HepG2 (cell line): ENCODE measurements at regions of chr3 and their contacts with region 1.

Region 1: DNA sequence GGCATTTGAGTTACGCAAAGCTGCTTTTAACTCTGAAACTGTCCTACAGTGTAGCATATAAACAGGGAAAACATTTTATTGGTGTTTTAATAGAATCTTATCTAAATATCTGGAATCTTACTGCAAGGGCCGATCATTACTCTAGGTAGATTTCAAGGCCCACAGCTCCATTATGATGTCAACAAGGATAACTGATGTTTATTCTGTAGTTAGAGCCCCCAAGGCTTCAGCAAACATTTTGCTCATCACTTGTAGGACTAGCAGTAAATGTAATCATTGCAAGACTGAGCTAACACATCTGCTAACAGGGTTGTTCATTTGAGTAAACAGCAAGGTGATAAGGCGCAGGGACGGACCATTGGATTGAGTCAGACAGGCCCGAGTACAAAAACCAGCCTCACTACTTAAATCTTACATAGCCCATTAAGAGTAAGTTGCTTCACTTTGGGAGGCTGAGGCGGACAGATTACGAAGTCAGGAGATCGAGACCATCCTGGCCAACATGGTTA is 332.5 kb upstream of the TPRG1 start:
- DNase-seq: peak; percentile 98
- ATAC-seq: peak; percentile 100
- H3K4me3 ChIP-seq: peak overlapping the region in 1 of 3 experiments; percentile 12; a peak in 1 of 6 replicates
- H3K27ac ChIP-seq: peak overlapping the region; percentile 60
- H3K4me1 ChIP-seq: peaks cover 26% of the 10 kb centered on the region
- H3K27me3 ChIP-seq: no peaks in the 10 kb centered on the region
- CTCF ChIP-seq: no peak
- EP300 ChIP-seq: peak; percentile 85 to 98
- POLR2A ChIP-seq: no peak
- RAD21 ChIP-seq: no peak

Region 2: GRCh38 chr3:188720636-188721035 is 118.6 kb before region 1 on chr3:
- CTCF ChIA-PET with region 1: no interaction called
- POLR2A ChIA-PET with region 1: no interaction called
- in situ Hi-C with region 1: no loop called
- intact Hi-C with region 1: loop called (anchors 1 kb)
- DNase-seq: peak; percentile 95
- ATAC-seq: peak; percentile 99
- H3K4me3 ChIP-seq: no peak overlapping the region
- H3K27ac ChIP-seq: peak overlapping the region; percentile 78
- H3K4me1 ChIP-seq: peaks cover 47% of the 10 kb centered on the region
- H3K27me3 ChIP-seq: no peaks in the 10 kb centered on the region
- CTCF ChIP-seq: no peak
- EP300 ChIP-seq: peak; percentile 74 to 99; a peak in 3 of 4 replicates
- POLR2A ChIP-seq: no peak
- RAD21 ChIP-seq: no peak

Region 3: DNA sequence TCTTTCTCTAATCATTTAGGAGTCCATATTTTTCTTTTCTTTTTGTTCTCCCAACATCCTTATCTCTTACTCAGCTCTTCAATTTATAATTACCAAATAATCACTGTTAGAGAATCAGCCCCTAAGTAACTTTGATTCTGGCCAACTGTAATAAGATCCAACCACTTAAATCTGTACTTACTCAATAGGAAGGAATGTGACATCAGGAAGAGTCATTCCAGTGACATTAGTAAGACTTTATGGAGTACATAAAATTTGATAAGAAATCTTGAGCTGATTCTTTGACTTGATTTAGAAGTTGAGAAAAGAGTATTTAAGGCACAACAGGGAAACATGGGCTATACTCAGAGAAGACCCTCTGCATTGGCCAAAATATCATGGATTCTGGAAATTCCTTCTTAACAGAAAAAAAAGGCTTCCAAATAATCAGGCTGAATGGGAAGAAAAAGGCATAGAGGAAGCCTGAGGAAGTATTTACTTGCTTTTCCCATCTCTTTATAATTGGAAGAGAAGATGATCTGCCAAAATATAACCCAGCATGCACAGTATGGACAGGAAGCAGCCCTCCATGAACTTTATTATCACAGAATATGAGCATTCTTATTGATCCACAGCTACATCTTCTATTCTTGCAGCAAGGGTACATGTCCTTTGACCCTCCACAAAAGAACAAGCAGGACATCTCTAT is 42.9 kb after region 1 on chr3:
- CTCF ChIA-PET with region 1: no interaction called
- POLR2A ChIA-PET with region 1: interaction called, 8 read pairs
- in situ Hi-C with region 1: no loop called
- intact Hi-C with region 1: loop called (anchors 2 kb)
- DNase-seq: peak; percentile 24
- ATAC-seq: no peak
- H3K4me3 ChIP-seq: no peak overlapping the region
- H3K27ac ChIP-seq: peak overlapping the region; percentile 62
- H3K4me1 ChIP-seq: peaks cover 26% of the 10 kb centered on the region
- H3K27me3 ChIP-seq: no peaks in the 10 kb centered on the region
- CTCF ChIP-seq: no peak
- EP300 ChIP-seq: no peak
- POLR2A ChIP-seq: no peak
- RAD21 ChIP-seq: no peak

Region 4: DNA sequence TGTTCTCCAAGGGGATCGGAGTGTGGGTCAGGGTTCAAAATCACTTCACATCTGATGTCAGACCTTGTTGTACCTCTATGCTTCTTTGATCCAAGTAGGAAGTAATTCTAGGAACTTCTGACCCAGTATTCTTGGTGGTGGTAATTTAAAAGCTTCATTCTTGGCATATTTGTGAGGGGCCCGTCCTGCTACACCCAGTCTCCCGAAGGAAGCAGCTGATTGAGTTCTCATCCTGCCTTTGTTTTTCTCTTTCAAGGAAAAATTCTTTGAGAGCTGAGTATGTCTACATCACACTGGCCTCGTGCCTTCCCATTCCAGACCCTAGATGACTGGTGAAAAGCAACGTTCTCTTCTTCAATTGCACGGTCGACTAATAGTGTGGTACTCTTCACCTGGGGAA is 98.1 kb after region 1 on chr3:
- CTCF ChIA-PET with region 1: no interaction called
- POLR2A ChIA-PET with region 1: no interaction called
- in situ Hi-C with region 1: no loop called
- intact Hi-C with region 1: loop called (anchors 5 kb)
- DNase-seq: no peak
- ATAC-seq: no peak
- H3K4me3 ChIP-seq: no peak overlapping the region
- H3K27ac ChIP-seq: no peak overlapping the region
- H3K4me1 ChIP-seq: peaks cover 11% of the 10 kb centered on the region
- H3K27me3 ChIP-seq: no peaks in the 10 kb centered on the region
- CTCF ChIP-seq: no peak
- EP300 ChIP-seq: no peak
- POLR2A ChIP-seq: no peak
- RAD21 ChIP-seq: no peak